ENCODE measurements at regions of chr16 and their contacts with region 1.

Region 1: DNA sequence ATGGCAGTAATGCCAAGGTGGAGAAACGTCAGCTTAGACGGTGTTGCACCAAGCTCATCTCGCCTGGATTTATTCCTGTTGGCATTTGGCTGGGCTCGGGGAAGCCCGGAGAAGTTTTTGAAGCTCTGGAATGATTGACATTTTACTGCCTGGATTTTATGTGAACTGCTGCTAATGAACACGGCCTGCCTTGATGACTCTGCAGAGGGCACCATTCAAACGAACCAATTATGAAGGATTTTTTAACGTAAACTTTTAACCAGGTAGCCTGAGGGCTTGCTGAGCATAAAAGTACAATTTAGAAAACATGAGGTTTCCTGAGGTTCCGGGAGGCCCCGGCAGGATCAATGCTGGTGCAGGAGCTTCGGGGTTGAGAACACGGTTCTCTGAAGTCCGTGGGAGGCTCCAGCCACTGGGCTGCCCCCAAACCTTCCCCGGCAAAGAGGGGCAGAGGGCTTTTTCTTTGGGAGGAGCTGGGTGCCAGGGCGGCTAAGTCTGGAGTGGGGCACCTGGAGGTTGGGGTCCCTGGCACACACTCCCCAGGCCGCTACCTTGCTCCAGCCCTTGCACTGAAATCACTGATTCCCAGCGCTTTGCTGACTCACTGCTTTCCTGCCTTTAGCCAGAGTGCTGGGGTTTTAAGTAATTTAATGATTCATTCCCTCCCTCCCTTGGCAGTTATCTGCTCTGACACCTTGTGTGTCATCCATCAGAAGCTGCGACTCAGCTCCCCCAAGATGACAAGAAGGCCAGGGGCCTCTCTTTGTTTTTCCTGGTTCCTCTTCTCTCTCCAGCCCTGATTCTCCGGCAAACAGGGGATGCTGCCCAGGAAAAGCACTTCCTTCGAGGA is 161.2 kb upstream of the IRX3 start:
- DNase-seq: peak; percentile 93
- H3K4me3 Mint-ChIP-seq: no peak overlapping the region
- H3K27ac Mint-ChIP-seq: no peak overlapping the region
- H3K4me1 Mint-ChIP-seq: peaks cover 32% of the 10 kb centered on the region
- H3K27me3 Mint-ChIP-seq: no peaks in the 10 kb centered on the region
- CTCF ChIP-seq: no peak

Region 2: DNA sequence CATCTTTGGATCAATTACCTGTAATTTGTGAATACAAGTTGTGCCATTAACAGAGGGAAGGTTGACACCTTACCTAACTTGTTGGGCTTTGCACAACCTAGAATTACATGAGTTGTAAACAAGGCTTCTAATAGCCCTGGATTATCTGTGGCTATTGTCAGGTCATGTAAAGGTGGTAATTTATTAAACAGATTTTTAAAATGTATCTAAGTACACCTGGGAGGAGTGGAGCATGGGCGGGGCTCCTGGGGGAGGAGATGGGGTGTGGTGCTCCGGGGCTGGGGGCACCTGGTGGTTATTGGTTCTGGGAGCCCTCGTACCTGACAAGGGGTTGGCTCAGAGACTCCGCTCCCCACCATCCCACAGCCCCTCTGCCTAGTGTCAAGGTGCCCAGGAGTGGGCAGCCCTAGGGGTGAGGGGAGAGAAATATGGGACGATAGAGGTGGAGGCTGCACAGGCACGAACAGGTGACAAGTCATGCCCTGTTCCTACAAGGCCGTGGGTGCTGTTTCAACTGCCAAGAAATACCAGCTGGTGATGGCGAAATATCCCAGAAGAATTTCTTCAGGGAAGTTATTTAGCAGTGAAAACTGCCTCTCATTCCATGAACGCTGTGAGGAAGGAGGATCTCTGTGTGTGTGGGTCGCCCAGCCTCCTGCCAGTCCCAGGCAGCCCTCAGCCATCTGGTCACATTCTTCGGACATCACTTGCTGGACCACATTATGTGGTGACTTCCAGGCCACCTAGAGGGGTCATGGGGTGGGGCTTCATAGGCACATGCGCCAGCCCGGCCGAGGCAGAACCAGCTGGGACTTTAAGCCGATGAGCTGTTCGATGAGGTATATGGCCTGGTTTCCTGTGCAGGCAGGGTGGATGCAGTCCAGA is 105.7 kb before region 1 on chr16:
- CTCF ChIA-PET with region 1: interaction called, 3 read pairs
- POLR2A ChIA-PET with region 1: interaction called, 12 read pairs
- intact Hi-C with region 1: no loop called
- DNase-seq: peak; percentile 87
- H3K4me3 Mint-ChIP-seq: peak overlapping the region; percentile 40
- H3K27ac Mint-ChIP-seq: peak overlapping the region; percentile 83
- H3K4me1 Mint-ChIP-seq: peaks cover 26% of the 10 kb centered on the region
- H3K27me3 Mint-ChIP-seq: no peaks in the 10 kb centered on the region
- CTCF ChIP-seq: no peak

Region 3: DNA sequence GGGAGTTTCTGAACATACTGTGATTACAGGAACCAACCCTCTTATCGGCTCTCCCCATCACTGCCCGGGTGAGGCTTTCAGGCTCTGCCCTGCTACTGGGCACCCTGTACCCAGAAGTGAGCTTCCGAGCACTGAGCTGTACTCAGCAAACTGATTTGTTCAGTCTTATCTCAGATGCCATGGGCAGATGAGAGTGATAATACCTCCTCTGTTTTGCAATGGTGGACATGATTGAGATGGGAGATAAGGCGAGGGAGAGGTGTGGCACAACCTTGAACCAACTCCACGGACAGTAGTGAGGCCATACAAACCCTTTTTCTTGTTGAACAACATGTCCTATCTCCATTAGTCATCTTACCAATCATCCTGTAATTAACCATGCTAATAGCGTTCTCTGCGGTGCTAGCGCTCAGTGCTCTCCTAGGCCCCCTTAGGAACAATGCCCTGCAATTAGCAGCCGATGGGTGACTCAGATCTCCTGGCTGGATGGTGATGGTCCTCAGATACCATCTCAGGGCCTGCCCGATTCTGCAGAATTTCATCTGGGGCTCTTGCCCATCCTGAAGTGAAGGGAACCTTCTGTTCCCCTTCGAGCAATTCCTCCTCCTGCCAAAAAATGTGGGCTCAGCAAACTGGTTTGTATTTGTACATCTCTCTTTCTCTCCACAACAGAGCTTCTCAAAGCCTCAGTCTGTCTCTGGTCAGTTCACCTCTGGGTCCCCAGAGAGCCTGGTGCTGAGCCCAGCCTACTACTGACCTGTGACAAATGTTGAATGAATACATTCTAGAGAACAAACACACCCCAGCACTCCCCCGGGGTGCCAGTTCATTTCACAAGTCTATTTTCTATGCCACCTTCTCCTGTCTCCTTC is 21.9 kb before region 1 on chr16:
- CTCF ChIA-PET with region 1: interaction called, 5 read pairs
- POLR2A ChIA-PET with region 1: interaction called, 73 read pairs
- intact Hi-C with region 1: no loop called
- DNase-seq: no peak
- H3K4me3 Mint-ChIP-seq: peak overlapping the region; percentile 7
- H3K27ac Mint-ChIP-seq: no peak overlapping the region
- H3K4me1 Mint-ChIP-seq: peaks cover 45% of the 10 kb centered on the region
- H3K27me3 Mint-ChIP-seq: no peaks in the 10 kb centered on the region
- CTCF ChIP-seq: no peak

Region 4: DNA sequence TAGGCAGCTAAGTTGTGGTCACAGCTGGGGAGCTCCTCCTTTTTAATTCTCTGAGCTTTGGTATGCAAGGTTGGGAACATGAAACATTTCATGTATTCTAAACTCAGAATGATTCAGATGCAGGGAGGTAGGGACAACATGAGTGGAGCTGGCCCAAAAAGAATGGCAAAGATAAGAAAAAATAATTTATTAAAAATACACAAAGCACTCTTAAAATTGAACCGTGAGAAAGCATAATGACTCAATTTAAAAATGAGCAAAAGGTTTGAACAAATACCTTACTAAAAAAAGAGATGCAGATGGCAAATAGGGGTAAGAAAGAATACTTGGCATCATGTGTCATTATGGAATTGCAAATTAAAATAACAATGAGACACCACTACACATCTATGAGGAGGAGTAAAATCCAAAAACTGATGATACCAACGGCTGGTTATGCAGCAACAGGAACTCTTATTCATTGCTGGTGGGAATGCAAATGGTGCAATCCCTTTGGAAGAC is 14.4 kb after region 1 on chr16:
- CTCF ChIA-PET with region 1: interaction called, 4 read pairs
- POLR2A ChIA-PET with region 1: interaction called, 10 read pairs
- intact Hi-C with region 1: no loop called
- DNase-seq: peak; percentile 59
- H3K4me3 Mint-ChIP-seq: no peak overlapping the region
- H3K27ac Mint-ChIP-seq: peak overlapping the region; percentile 20
- H3K4me1 Mint-ChIP-seq: peaks cover 7% of the 10 kb centered on the region
- H3K27me3 Mint-ChIP-seq: no peaks in the 10 kb centered on the region
- CTCF ChIP-seq: no peak

Region 5: GRCh38 chr16:54633943-54634362 is 186.1 kb after region 1 on chr16:
- CTCF ChIA-PET with region 1: interaction called, 4 read pairs
- POLR2A ChIA-PET with region 1: interaction called, 4 read pairs
- intact Hi-C with region 1: loop called (anchors 10 kb)
- DNase-seq: peak; percentile 78
- H3K4me3 Mint-ChIP-seq: no peak overlapping the region
- H3K27ac Mint-ChIP-seq: no peak overlapping the region
- H3K4me1 Mint-ChIP-seq: peaks cover 8% of the 10 kb centered on the region
- H3K27me3 Mint-ChIP-seq: no peaks in the 10 kb centered on the region
- CTCF ChIP-seq: peak; percentile 76

Measured in MCF 10A (cell line).